ENCODE measurements at regions of chr7 and their contacts with region 1.

Region 1: DNA sequence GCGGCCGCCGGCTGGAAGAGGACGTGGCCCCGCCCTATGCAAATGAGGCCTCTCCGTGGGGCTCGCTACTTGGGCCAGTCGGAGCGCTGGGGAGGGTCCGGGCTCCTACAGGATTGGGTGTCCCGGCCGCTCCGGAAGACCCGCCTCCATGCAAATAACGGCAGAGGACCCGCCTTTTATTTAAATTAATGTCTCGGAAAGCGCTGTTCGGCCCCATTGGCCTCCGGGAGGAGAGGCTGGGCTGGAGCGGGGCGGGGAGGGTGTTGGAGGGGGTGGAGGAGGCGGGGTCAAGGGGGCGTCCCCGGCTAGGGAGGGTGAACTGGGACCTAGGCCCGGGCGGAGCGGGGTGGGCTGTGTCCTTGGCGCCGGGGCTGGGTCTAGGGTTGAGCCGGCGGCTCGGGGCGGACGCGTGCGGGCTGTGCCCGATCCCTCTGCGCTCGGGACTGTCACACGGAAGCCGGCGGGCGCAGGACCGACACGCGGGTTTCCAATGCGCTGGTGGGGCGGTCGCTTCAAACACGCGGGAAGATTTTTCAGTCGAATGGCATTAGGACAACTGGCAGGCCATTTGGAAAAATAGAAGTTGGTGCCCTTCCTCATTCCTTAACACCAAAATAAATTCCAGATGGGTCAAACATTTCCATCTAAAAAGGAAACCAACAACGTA is 344 bp upstream of the POLM start:
- DNase-seq: peak; percentile 93 to 100 (median 98)

Region 2: GRCh38 chr7:44044315-44045225 is 38.1 kb before region 1 on chr7 and contains the start of gene DBNL:
- intact Hi-C with region 1: loop called (anchors 5 kb)
- DNase-seq: peak; percentile 96 to 100 (median 98)

Region 3: DNA sequence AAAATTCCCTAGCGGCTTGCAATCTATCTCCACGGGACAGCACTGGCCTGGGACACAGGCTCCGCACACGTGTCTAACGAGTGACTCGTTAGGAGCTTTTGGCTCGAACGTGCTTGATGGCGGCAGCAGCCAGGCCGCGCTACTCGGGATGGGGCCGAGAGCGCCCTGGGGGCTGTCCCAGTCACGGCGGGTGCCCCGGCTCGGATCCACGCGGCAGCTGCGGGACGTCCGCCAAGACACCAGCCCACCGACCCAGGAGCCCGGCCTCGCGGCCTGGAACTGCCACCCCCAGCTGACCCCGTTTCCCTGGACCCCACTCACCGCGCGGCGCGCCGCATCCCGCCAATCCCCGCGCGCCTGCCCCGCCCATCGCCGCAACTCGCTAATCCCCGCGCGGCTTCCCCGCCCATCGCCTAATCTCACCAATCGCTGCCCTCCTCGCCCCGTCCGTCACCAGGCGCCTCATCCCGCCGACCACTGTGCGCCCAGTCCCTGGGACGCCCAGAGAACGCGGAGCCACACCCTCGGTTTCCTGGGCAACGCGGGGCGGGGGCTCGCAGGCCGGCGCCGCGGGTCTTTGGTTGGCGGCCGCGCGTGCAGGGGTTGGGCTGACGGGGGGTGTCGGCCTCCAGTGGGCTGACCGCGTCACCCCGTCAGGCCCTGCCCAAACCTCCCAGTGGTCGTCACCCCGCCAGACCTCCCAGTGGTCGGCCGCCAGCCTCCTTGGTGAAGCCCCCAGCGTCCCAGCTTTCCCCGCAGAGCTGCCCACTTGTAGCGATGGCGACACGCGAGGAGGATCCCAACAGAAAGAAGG is 40.7 kb after region 1 on chr7 and contains the start of gene POLD2:
- intact Hi-C with region 1: loop called (anchors 1 kb)
- DNase-seq: peak; percentile 97 to 100 (median 98)

Region 4: GRCh38 chr7:44200647-44201461 is 118.2 kb after region 1 on chr7 and contains the start of gene YKT6:
- intact Hi-C with region 1: loop called (anchors 5 kb)
- DNase-seq: peak; percentile 91 to 99 (median 94)